K562 (cell line): ENCODE measurements at regions of chr5 and their contacts with region 1.

Region 1: GRCh38 chr5:91383027-91383955 is at the start of gene ARRDC3:
- DNase-seq: peak; percentile 81 to 98 (median 88)
- ATAC-seq: peak; percentile 64
- H3K4me3 ChIP-seq: peak within 1 kb of the TSS; percentile 60
- H3K27ac ChIP-seq: peak within 1 kb of the TSS; percentile 96
- H3K4me1 ChIP-seq: no peaks in the 10 kb centered on the region
- H3K27me3 ChIP-seq: no peaks in the 10 kb centered on the region
- CTCF ChIP-seq: no peak
- EP300 ChIP-seq: peak; percentile 23
- POLR2A ChIP-seq: peak; percentile 99
- RAD21 ChIP-seq: peak in 1 of 2 experiments; percentile 16; a peak in 1 of 4 replicates
- polyA plus RNA-seq, gene ARRDC3: 23.8 to 30.2 TPM

Region 2: GRCh38 chr5:90866333-90866732 is 517.0 kb before region 1 on chr5:
- CTCF ChIA-PET with region 1: interaction called, 42 read pairs
- POLR2A ChIA-PET with region 1: interaction called, 6 read pairs
- in situ Hi-C with region 1: loop called (anchors 10 kb)
- intact Hi-C with region 1: loop called (anchors 1 kb)
- DNase-seq: peak; percentile 18 to 47 (median 31)
- ATAC-seq: peak; percentile 84
- H3K4me3 ChIP-seq: no peak overlapping the region
- H3K27ac ChIP-seq: no peak overlapping the region; the same call in 2 of the 3 replicates
- H3K4me1 ChIP-seq: no peaks in the 10 kb centered on the region
- H3K27me3 ChIP-seq: no peaks in the 10 kb centered on the region
- CTCF ChIP-seq: peak; percentile 30 to 73 (median 32); a peak in 3 of 6 replicates
- EP300 ChIP-seq: no peak
- POLR2A ChIP-seq: no peak
- RAD21 ChIP-seq: peak; percentile 68 to 75

Region 3: DNA sequence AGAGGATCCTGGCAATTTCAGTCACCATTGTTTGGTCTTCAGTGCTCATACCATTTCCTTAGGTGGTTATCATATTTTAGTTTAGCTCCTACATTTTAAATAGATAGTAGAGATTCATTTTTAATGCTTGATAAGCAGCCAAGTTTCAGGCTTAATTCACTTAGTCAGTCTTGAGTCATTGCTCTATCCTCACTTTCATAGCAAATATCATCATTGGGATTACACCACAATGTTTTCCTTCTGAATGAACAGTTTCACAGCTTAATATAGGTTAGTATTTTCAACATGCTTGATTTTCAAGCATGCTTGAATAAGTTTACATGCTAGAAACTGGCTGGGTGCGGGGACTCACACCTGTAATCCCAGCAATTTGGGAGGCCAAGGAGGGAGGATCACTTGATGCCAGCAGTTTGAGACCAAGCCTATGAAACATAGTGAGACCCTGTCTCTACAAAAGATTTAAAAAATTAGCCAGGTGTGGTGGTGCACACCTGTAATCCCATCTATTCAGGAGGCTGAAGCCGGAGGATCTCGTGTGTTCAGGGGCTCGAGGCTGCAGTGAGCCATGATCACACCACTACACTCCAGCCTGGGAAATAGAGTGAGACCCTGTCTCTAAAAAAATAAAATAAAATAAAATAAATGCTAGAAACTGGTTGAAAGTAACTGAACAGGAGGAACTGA is 484.8 kb before region 1 on chr5:
- CTCF ChIA-PET with region 1: no interaction called
- POLR2A ChIA-PET with region 1: no interaction called
- in situ Hi-C with region 1: no loop called
- intact Hi-C with region 1: no loop called
- DNase-seq: no peak
- ATAC-seq: no peak
- H3K4me3 ChIP-seq: no peak overlapping the region
- H3K27ac ChIP-seq: no peak overlapping the region
- H3K4me1 ChIP-seq: no peaks in the 10 kb centered on the region
- H3K27me3 ChIP-seq: no peaks in the 10 kb centered on the region
- CTCF ChIP-seq: no peak
- EP300 ChIP-seq: no peak
- POLR2A ChIP-seq: no peak
- RAD21 ChIP-seq: no peak

Region 4: DNA sequence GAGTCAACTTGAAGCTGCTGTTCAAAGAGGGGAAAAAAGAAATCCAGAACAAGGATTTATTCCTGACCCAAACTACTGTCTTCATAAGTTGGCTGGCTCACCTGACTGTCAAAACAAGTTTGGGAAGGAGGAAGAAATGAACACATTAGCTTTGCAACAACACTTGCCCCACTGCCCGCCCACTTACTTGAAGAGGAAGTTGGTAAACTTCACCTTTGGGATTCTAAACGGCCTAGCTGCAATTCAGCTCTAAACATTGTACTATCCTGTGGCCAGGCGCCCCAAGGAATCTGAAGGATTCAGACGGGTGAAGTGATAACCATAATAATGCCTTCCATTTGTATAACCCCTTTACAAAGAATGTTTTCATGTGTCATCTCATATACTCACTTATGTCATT is 199.6 kb before region 1 on chr5:
- CTCF ChIA-PET with region 1: interaction called, 3 read pairs
- POLR2A ChIA-PET with region 1: interaction called, 6 read pairs
- in situ Hi-C with region 1: no loop called
- intact Hi-C with region 1: loop called (anchors 2 kb)
- DNase-seq: no peak
- ATAC-seq: no peak
- H3K4me3 ChIP-seq: no peak overlapping the region
- H3K27ac ChIP-seq: no peak overlapping the region
- H3K4me1 ChIP-seq: no peaks in the 10 kb centered on the region; a peak in 1 of 5 replicates
- H3K27me3 ChIP-seq: no peaks in the 10 kb centered on the region
- CTCF ChIP-seq: no peak
- EP300 ChIP-seq: no peak
- POLR2A ChIP-seq: no peak
- RAD21 ChIP-seq: no peak

Region 5: GRCh38 chr5:91245871-91246270 is 137.4 kb before region 1 on chr5:
- CTCF ChIA-PET with region 1: interaction called, 5 read pairs
- POLR2A ChIA-PET with region 1: no interaction called
- in situ Hi-C with region 1: no loop called
- intact Hi-C with region 1: loop called (anchors 1 kb)
- DNase-seq: no peak
- ATAC-seq: no peak
- H3K4me3 ChIP-seq: no peak overlapping the region
- H3K27ac ChIP-seq: no peak overlapping the region
- H3K4me1 ChIP-seq: no peaks in the 10 kb centered on the region
- H3K27me3 ChIP-seq: no peaks in the 10 kb centered on the region; a peak in 1 of 5 replicates
- CTCF ChIP-seq: peak in 1 of 3 experiments; percentile 37; a peak in 3 of 6 replicates
- EP300 ChIP-seq: no peak
- POLR2A ChIP-seq: no peak
- RAD21 ChIP-seq: peak; percentile 8 to 48; a peak in 2 of 4 replicates

Region 6: DNA sequence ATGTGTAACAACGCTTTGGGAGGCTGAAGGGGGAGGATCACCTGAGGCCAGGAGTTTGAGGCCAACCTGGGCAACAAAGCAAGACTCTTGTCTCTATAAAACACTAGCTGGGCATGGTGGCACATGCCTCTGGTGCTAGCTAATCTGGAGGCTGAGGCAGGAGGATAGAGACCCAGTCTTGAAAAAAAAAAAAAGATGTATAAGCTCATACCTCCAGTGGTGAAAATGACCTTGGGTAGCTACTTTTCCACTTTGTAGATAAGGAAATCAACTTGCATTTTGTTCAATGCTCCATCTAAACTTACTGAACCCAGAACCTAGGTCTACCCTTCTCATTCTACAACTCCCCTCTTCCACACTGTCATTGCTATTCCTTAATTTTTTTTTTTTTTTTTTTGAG is 16.7 kb before region 1 on chr5:
- CTCF ChIA-PET with region 1: no interaction called
- POLR2A ChIA-PET with region 1: interaction called, 47 read pairs
- in situ Hi-C with region 1: no loop called
- intact Hi-C with region 1: no loop called
- DNase-seq: no peak
- ATAC-seq: peak; percentile 2; the same call in 1 of the 3 replicates
- H3K4me3 ChIP-seq: no peak overlapping the region
- H3K27ac ChIP-seq: no peak overlapping the region
- H3K4me1 ChIP-seq: no peaks in the 10 kb centered on the region
- H3K27me3 ChIP-seq: no peaks in the 10 kb centered on the region
- CTCF ChIP-seq: no peak
- EP300 ChIP-seq: no peak
- POLR2A ChIP-seq: no peak
- RAD21 ChIP-seq: no peak